GM13976 (cell line): ENCODE measurements at regions of chr9 and their contacts with region 1.

Region 1: GRCh38 chr9:93159601-93160471 is 24.1 kb upstream of the WNK2 start:
- DNase-seq: peak; percentile 93
- CTCF ChIP-seq: peak; percentile 99

Region 2: DNA sequence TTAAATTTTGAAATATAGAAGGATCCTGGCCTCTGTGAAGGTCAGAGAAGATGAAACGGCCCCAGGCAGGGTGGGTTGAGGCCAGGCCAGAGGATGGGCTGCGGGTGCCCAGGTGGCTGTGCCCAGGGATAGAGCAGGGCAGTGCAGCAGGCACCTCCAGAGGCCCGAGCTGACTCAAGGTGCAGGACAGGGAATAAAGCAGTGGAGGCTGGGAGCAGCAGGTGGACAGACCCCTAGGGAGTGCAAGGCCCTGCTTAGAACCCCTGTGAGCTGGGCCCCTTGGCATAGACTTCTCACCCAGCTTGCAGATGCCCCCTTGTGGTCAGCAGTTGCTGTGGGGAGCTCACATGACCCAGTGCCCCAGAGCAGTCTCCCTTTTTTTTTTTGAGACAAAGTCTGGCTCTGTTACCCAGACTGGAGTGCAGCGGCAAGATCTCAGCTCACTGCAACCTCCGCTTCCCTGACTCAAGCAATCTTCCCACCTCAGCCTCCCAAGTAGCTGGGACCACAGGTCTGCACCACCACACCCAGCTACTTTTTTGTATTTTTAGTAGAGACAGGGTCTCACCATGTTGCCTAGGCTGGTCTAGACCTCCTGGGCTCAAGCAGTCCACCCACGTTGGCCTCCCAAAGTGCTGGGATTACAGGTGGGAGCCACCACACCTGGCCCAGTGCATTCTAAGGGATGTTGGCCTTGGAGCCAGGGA is 142.9 kb after region 1 on chr9:
- in situ Hi-C with region 1: loop called (anchors 5 kb)
- DNase-seq: peak; percentile 80
- CTCF ChIP-seq: peak; percentile 33

Region 3: DNA sequence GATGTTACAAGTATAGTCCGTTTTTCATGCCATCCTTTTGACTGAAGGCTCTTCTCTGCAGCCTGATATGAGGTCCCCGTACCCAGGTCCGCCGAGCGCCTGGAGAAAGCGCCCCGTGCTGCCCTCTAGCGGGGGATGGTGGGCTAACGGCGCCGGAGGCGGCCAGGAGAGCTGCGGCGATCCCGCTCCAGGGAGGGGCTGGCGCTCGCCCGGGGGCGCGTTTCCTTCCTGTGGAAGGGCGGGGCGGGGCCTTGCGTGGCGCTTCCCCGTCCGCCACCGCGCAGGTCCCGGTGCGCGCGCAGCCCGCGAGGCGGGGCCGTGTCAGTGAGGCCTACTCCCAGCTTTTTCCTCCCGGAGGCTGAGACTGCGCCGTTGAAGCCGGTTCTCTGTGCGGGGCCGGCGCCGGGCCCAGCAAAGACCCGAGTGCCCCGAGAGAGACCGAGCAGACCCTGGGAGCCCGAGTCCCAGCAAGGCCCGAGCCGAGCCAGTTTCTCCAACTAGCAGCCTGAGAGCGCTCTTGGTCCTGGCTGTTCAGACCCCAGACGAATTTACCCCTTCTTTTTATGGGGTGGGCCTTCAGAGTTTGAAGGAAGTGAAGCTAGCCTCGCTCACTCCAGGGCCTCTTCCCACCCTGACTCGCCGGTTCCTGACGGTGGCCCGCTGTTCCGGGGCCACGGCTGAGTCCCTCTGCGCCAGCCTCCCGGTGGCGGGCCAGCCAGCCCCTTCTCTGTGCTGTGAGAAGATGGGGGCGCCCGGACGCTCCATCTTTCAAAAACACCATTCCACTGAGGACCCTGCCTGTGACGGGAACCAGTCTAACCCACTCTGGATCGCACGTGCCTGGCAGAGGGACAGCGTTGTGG is 406.8 kb after region 1 on chr9:
- in situ Hi-C with region 1: loop called (anchors 25 kb)
- DNase-seq: peak; percentile 99
- CTCF ChIP-seq: peak; percentile 93